Activated T-helper 2 cell treated with anti-CD3 and anti-CD28 coated beads, Interferon-gamma antibody, Interleukin-2, Interleukin-4, amounts not matched to agents 10 μg/mL and 5 μg/mL and 100 μg/mL, durations not matched to agents 14 hours and 24 hours and 36 hours (primary cell): ENCODE measurements at regions of chr11 and their contacts with region 1.

Region 1: DNA sequence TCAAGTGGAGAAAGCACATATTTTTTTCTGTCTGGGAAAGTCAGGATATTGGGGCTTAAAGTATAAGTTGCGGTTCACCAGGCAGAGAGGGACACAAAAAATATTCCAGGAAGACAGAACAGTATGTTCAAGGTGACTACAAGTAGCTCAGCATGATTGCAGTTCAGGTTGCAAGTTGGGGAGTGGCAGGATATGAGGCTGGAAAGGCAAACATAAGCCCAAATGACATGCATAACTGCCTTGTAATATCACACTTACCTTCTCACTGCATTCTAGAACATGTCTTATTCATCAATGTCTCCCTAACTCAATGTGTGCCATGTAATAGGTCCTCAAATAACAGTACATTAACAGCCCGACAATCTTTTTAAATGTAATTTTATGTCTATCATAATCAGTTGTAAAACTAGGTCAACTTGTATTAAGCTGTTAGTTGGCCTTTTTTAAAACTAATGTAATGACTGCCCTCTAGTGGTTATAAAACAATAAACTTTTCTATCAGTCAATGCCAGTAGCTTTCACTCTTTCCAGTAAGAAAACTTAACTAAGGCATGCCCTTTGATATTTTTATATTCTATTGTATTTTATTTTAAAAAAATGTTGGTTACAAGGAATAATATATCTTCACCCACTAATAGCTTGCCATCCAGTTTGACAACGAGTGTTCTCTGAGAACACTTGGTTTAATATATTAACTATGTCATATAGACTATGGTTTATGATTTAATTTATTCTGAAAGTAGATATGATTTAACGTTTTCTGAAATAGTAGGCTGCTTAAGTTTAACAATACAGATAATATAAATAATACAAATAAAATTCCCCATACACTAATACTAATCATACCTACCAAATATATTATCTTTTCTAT is 39.4 kb upstream of the CFAP300 start:
- DNase-seq: no peak
- H3K4me3 Mint-ChIP-seq: no peak overlapping the region
- H3K27ac Mint-ChIP-seq: no peak overlapping the region
- H3K4me1 Mint-ChIP-seq: peaks cover 6% of the 10 kb centered on the region
- H3K27me3 Mint-ChIP-seq: peaks cover 11% of the 10 kb centered on the region

Region 2: GRCh38 chr11:101860696-101861427 is 146.9 kb before region 1 on chr11:
- intact Hi-C with region 1: loop called (anchors 1 kb)
- DNase-seq: no peak
- H3K4me3 Mint-ChIP-seq: no peak overlapping the region
- H3K27ac Mint-ChIP-seq: no peak overlapping the region
- H3K4me1 Mint-ChIP-seq: no peaks in the 10 kb centered on the region
- H3K27me3 Mint-ChIP-seq: peaks cover 1% of the 10 kb centered on the region